ENCODE measurements at regions of chr9 and their contacts with region 1.

Region 1: GRCh38 chr9:33452828-33453271 is 5.5 kb upstream of the AQP3 start:
- DNase-seq: peak; percentile 81
- H3K4me3 ChIP-seq: no peak overlapping the region
- H3K27ac ChIP-seq: peak overlapping the region; percentile 39
- H3K4me1 ChIP-seq: peaks cover 14% of the 10 kb centered on the region
- H3K27me3 ChIP-seq: peaks cover 0 to 2% of the 10 kb centered on the region in 2 experiments
- CTCF ChIP-seq: peak; percentile 82 to 94
- POLR2A ChIP-seq: no peak

Region 2: DNA sequence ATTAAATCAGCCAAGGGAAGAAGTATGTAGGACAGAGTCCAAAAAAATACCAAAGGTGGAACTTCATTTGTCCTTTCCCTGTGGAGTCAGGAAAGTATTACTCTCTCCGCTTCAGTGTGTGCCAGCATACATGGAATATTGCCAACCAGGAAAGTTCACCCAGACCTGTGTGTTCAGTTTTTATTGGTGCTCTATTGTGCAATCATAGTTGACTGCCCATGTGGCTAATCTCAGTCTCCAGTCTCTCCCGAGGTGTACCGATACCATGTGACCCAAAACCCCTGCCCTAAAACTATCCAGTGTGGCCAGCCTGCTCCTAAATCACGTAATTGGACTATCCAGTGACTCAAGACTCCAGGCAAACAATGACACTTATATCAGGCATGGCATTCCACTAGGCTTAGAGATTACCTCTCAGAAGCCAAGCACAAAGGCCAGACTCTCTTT is 123.7 kb before region 1 on chr9:
- CTCF ChIA-PET with region 1: interaction called, 13 read pairs
- POLR2A ChIA-PET with region 1: no interaction called
- dilution Hi-C with region 1: no loop called
- intact Hi-C with region 1: no loop called
- DNase-seq: peak; percentile 94
- H3K4me3 ChIP-seq: no peak overlapping the region
- H3K27ac ChIP-seq: peak overlapping the region; percentile 69
- H3K4me1 ChIP-seq: peaks cover 48% of the 10 kb centered on the region
- H3K27me3 ChIP-seq: no peaks in the 10 kb centered on the region
- CTCF ChIP-seq: no peak
- POLR2A ChIP-seq: no peak

Region 3: GRCh38 chr9:33374634-33375213 is 78.1 kb before region 1 on chr9:
- CTCF ChIA-PET with region 1: interaction called, 121 read pairs
- POLR2A ChIA-PET with region 1: no interaction called
- dilution Hi-C with region 1: no loop called
- intact Hi-C with region 1: loop called (anchors 1 kb)
- DNase-seq: peak; percentile 88
- H3K4me3 ChIP-seq: peak overlapping the region in 1 of 3 experiments; percentile 16
- H3K27ac ChIP-seq: no peak overlapping the region
- H3K4me1 ChIP-seq: peaks cover 6% of the 10 kb centered on the region
- H3K27me3 ChIP-seq: no peaks in the 10 kb centered on the region
- CTCF ChIP-seq: peak; percentile 85 to 91
- POLR2A ChIP-seq: no peak

Region 4: DNA sequence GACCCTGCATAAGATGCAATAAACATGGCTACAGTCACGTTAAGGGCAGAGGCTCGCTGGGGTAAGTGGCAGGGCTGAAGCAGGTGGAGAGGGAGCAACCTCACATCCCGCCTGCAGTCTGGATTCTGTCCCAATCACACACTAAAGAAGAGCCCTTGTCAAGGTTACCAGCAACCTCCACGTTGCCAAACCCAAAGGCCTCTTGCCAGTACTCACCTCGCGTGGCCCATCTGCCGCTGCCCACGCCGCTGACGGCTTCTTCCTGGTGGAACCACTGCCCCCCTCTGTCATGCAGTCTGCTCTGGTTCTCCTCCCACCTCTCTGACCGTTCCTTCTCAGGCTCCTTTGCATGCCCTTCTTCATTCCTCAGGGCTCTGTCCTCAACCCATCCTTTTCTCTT is 59.3 kb before region 1 on chr9:
- CTCF ChIA-PET with region 1: interaction called, 14 read pairs
- POLR2A ChIA-PET with region 1: interaction called, 3 read pairs
- dilution Hi-C with region 1: no loop called
- intact Hi-C with region 1: loop called (anchors 1 kb)
- DNase-seq: no peak
- H3K4me3 ChIP-seq: no peak overlapping the region
- H3K27ac ChIP-seq: no peak overlapping the region
- H3K4me1 ChIP-seq: peaks cover 5% of the 10 kb centered on the region
- H3K27me3 ChIP-seq: no peaks in the 10 kb centered on the region
- CTCF ChIP-seq: no peak
- POLR2A ChIP-seq: no peak

Region 5: GRCh38 chr9:33415501-33416038 is 37.3 kb before region 1 on chr9:
- CTCF ChIA-PET with region 1: interaction called, 49 read pairs
- POLR2A ChIA-PET with region 1: no interaction called
- dilution Hi-C with region 1: no loop called
- intact Hi-C with region 1: no loop called
- DNase-seq: peak; percentile 49
- H3K4me3 ChIP-seq: no peak overlapping the region
- H3K27ac ChIP-seq: no peak overlapping the region
- H3K4me1 ChIP-seq: no peaks in the 10 kb centered on the region
- H3K27me3 ChIP-seq: peaks cover 0 to 3% of the 10 kb centered on the region in 2 experiments
- CTCF ChIP-seq: peak; percentile 83 to 84
- POLR2A ChIP-seq: no peak

Region 6: GRCh38 chr9:33436440-33436839 is 16.4 kb before region 1 on chr9:
- CTCF ChIA-PET with region 1: interaction called, 57 read pairs
- POLR2A ChIA-PET with region 1: no interaction called
- dilution Hi-C with region 1: no loop called
- intact Hi-C with region 1: no loop called
- DNase-seq: no peak
- H3K4me3 ChIP-seq: no peak overlapping the region
- H3K27ac ChIP-seq: no peak overlapping the region
- H3K4me1 ChIP-seq: peaks cover 3% of the 10 kb centered on the region
- H3K27me3 ChIP-seq: peaks cover 2 to 6% of the 10 kb centered on the region in 2 experiments
- CTCF ChIP-seq: no peak
- POLR2A ChIP-seq: no peak

Region 7: GRCh38 chr9:33473643-33474352 is 20.9 kb after region 1 on chr9 and contains the start of gene NOL6:
- CTCF ChIA-PET with region 1: interaction called, 49 read pairs
- POLR2A ChIA-PET with region 1: interaction called, 3 read pairs
- dilution Hi-C with region 1: no loop called
- intact Hi-C with region 1: loop called (anchors 2 kb)
- DNase-seq: peak; percentile 100
- H3K4me3 ChIP-seq: peak within 1 kb of the TSS; percentile 62 to 96 (median 89)
- H3K27ac ChIP-seq: peak within 1 kb of the TSS; percentile 70
- H3K4me1 ChIP-seq: peaks cover 15% of the 10 kb centered on the region
- H3K27me3 ChIP-seq: no peaks in the 10 kb centered on the region
- CTCF ChIP-seq: no peak
- POLR2A ChIP-seq: peak; percentile 94
- total RNA-seq, gene NOL6: 42.3 and 45.1 TPM in 2 replicates